Activated B cell treated with CpG ODN at 0.5 μM for 24 hours (primary cell): ENCODE measurements at regions of chrX and their contacts with region 1.

Region 1: GRCh38 chrX:136747003-136747986 is 33.4 kb downstream of the ARHGEF6 start:
- DNase-seq: no peak
- ATAC-seq: peak; percentile 81
- H3K4me3 Mint-ChIP-seq: peak overlapping the region; percentile 69
- H3K27ac Mint-ChIP-seq: peak overlapping the region; percentile 95
- H3K4me1 Mint-ChIP-seq: peaks cover 79% of the 10 kb centered on the region
- H3K27me3 Mint-ChIP-seq: no peaks in the 10 kb centered on the region
- CTCF ChIP-seq: no peak

Region 2: DNA sequence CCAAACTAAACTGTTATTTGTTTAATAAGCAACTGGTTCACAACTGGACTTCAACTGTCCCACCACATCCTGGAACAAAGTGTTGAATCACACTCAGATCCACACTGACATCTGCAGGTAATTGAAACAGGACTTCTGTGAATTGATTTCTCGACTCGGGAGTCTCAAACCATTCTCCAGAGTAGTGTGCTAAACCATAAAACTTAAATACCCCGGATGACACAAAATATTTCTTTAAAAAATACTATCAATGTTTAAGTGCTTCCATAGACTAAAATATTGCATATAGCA is 1993.6 kb before region 1 on chrX:
- CTCF ChIA-PET with region 1: no interaction called
- POLR2A ChIA-PET with region 1: no interaction called
- intact Hi-C with region 1: no loop called
- DNase-seq: no peak
- ATAC-seq: no peak
- H3K4me3 Mint-ChIP-seq: no peak overlapping the region
- H3K27ac Mint-ChIP-seq: no peak overlapping the region
- H3K4me1 Mint-ChIP-seq: no peaks in the 10 kb centered on the region
- H3K27me3 Mint-ChIP-seq: peaks cover 1% of the 10 kb centered on the region
- CTCF ChIP-seq: no peak

Region 3: DNA sequence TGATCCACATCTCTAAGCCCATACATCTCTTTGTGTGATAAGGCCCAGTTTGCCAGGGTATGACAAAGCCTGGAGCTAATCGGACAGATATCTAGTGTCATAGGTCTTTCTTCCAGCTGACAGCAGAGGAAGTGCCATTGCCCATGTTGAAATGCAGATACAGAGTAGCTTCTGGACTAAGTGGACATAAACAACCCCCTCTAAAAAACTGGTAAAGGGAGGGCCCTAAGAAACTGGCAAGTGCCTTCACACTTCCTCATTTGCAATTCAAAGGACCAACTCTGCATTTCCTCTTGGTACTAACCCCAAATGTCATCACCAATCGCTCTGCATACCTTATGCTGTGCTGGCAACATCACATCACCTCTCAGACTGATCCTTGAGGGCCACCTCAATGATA is 12.7 kb after region 1 on chrX:
- CTCF ChIA-PET with region 1: no interaction called
- POLR2A ChIA-PET with region 1: interaction called, 4 read pairs
- intact Hi-C with region 1: loop called (anchors 1 kb)
- DNase-seq: no peak
- ATAC-seq: peak; percentile 87
- H3K4me3 Mint-ChIP-seq: peak overlapping the region; percentile 39
- H3K27ac Mint-ChIP-seq: peak overlapping the region; percentile 80
- H3K4me1 Mint-ChIP-seq: peaks cover 55% of the 10 kb centered on the region
- H3K27me3 Mint-ChIP-seq: no peaks in the 10 kb centered on the region
- CTCF ChIP-seq: no peak

Region 4: GRCh38 chrX:136780763-136781162 is 33.5 kb after region 1 on chrX and contains the start of gene ARHGEF6:
- CTCF ChIA-PET with region 1: no interaction called
- POLR2A ChIA-PET with region 1: interaction called, 14 read pairs
- intact Hi-C with region 1: loop called (anchors 2 kb)
- DNase-seq: no peak
- ATAC-seq: no peak
- H3K4me3 Mint-ChIP-seq: peak within 1 kb of the TSS; percentile 90
- H3K27ac Mint-ChIP-seq: peak within 1 kb of the TSS; percentile 92
- H3K4me1 Mint-ChIP-seq: peaks cover 54% of the 10 kb centered on the region
- H3K27me3 Mint-ChIP-seq: no peaks in the 10 kb centered on the region
- CTCF ChIP-seq: no peak
- total RNA-seq, gene ARHGEF6: 32.4 and 33.0 TPM in 2 replicates

Region 5: GRCh38 chrX:136794080-136794479 is 46.8 kb after region 1 on chrX:
- CTCF ChIA-PET with region 1: no interaction called
- POLR2A ChIA-PET with region 1: no interaction called
- intact Hi-C with region 1: no loop called
- DNase-seq: no peak
- ATAC-seq: no peak
- H3K4me3 Mint-ChIP-seq: no peak overlapping the region
- H3K27ac Mint-ChIP-seq: no peak overlapping the region
- H3K4me1 Mint-ChIP-seq: peaks cover 8% of the 10 kb centered on the region
- H3K27me3 Mint-ChIP-seq: no peaks in the 10 kb centered on the region
- CTCF ChIP-seq: no peak